IMR-90 (cell line): ENCODE measurements at regions of chr10 and their contacts with region 1.

Region 1: GRCh38 chr10:80136081-80136571 is 3.6 kb downstream of the PLAC9 start:
- DNase-seq: peak; percentile 88
- ATAC-seq: peak; percentile 61
- H3K4me3 ChIP-seq: no peak overlapping the region
- H3K27ac ChIP-seq: peak overlapping the region; percentile 74; the same call in 1 of the 2 replicates
- H3K4me1 ChIP-seq: peaks cover 21% of the 10 kb centered on the region
- H3K27me3 ChIP-seq: no peaks in the 10 kb centered on the region
- CTCF ChIP-seq: no peak
- POLR2A ChIP-seq: no peak
- RAD21 ChIP-seq: no peak

Region 2: DNA sequence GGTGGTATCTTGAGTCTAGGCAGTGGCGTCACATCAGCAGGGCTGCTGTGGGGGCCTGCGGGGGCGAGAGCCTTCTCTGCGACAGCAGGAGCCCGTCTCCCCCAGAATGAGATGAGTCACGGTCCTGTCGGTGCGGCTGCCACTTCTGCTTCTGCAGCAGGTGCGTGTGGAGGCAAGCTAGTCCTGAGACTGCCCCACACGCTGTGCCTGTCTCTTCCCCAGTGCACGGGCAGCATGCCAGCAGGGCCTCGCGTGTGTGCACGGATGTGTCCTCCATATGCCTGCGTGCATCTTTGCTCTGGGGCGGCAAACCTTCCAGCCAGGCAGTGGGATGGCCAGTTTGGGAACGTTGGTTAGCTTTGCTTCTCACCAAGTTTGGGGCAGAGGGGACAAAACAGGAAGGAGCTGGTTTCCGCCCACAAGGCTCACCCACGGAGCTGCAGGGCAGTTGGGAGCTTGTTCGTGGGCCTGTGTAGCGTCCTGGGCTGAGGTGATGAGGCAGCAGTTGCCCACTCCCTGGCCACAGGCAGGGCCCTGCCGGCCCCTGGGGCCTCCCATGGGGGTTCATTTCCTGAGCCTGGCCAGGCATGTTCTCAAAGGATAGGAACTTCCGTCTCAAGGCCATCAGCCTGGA is 849.7 kb before region 1 on chr10:
- CTCF ChIA-PET with region 1: no interaction called
- POLR2A ChIA-PET with region 1: no interaction called
- dilution Hi-C with region 1: no loop called
- in situ Hi-C with region 1: no loop called
- intact Hi-C with region 1: no loop called
- DNase-seq: peak; percentile 29
- ATAC-seq: no peak
- H3K4me3 ChIP-seq: no peak overlapping the region
- H3K27ac ChIP-seq: no peak overlapping the region
- H3K4me1 ChIP-seq: peaks cover 14% of the 10 kb centered on the region
- H3K27me3 ChIP-seq: no peaks in the 10 kb centered on the region
- CTCF ChIP-seq: no peak
- POLR2A ChIP-seq: no peak
- RAD21 ChIP-seq: no peak

Region 3: DNA sequence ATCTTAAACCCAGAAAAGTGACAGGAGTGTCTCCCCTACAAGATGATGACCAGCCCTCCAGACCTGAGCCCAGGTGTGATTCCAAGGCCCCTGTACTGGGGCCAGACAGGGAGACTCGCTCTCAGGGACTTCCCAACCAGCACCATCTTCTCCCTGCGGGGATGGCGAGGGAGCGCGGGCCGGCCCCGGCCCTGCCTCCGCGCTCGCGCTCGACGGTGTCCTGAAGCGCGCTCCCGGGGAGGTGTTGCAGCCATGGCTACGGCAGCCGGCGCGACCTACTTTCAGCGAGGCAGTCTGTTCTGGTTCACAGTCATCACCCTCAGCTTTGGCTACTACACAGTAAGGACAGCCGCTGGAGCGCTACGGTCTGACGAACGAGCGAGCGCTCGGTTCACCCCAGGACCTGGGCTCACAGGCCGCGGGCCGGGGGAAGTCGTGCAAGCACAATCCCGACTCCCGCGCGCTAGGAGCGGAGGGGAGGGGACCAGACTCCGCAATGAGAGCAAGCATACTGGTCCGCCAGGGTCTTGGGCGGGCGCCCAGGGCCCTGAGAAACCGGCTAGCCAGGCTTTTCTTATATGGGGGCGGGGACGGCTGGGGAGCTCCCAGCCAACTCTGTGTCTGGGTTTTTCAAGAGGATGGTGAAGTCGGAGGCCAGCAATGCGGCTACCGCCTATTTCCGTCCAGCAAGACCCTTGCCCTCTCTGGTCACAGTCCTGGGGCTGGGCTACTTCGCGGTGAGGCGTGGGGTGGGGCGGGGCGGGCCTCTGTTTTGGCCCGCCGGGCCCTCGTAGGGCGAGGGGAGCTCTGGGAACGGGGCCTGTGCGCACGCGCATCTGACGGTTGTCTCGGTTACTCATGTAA is 57.4 kb before region 1 on chr10 and contains the start of gene TMEM254:
- CTCF ChIA-PET with region 1: interaction called, 3 read pairs
- POLR2A ChIA-PET with region 1: no interaction called
- dilution Hi-C with region 1: no loop called
- in situ Hi-C with region 1: no loop called
- intact Hi-C with region 1: loop called (anchors 2 kb)
- DNase-seq: peak; percentile 81
- ATAC-seq: peak; percentile 96
- H3K4me3 ChIP-seq: peak within 1 kb of the TSS; percentile 77
- H3K27ac ChIP-seq: peak within 1 kb of the TSS; percentile 71
- H3K4me1 ChIP-seq: no peaks in the 10 kb centered on the region
- H3K27me3 ChIP-seq: no peaks in the 10 kb centered on the region
- CTCF ChIP-seq: no peak
- POLR2A ChIP-seq: peak; percentile 38
- RAD21 ChIP-seq: no peak
- total RNA-seq, gene TMEM254: 4.4 and 4.7 TPM in 2 replicates

Region 4: GRCh38 chr10:80122746-80123145 is 13.4 kb before region 1 on chr10:
- CTCF ChIA-PET with region 1: no interaction called
- POLR2A ChIA-PET with region 1: no interaction called
- dilution Hi-C with region 1: no loop called
- in situ Hi-C with region 1: no loop called
- intact Hi-C with region 1: no loop called
- DNase-seq: no peak
- ATAC-seq: no peak
- H3K4me3 ChIP-seq: no peak overlapping the region
- H3K27ac ChIP-seq: no peak overlapping the region
- H3K4me1 ChIP-seq: no peaks in the 10 kb centered on the region
- H3K27me3 ChIP-seq: peaks cover 5% of the 10 kb centered on the region
- CTCF ChIP-seq: no peak
- POLR2A ChIP-seq: no peak
- RAD21 ChIP-seq: no peak